ENCODE measurements at regions of chr13 and their contacts with region 1.

Region 1: GRCh38 chr13:94435604-94436226 is 43.8 kb downstream of the DCT start:
- DNase-seq: no peak
- H3K4me3 ChIP-seq: no peak overlapping the region
- H3K27ac ChIP-seq: no peak overlapping the region
- H3K4me1 ChIP-seq: no peaks in the 10 kb centered on the region
- H3K27me3 ChIP-seq: no peaks in the 10 kb centered on the region
- CTCF ChIP-seq: peak in 3 of 4 experiments; percentile 38 to 58 (median 57)
- POLR2A ChIP-seq: no peak

Region 2: DNA sequence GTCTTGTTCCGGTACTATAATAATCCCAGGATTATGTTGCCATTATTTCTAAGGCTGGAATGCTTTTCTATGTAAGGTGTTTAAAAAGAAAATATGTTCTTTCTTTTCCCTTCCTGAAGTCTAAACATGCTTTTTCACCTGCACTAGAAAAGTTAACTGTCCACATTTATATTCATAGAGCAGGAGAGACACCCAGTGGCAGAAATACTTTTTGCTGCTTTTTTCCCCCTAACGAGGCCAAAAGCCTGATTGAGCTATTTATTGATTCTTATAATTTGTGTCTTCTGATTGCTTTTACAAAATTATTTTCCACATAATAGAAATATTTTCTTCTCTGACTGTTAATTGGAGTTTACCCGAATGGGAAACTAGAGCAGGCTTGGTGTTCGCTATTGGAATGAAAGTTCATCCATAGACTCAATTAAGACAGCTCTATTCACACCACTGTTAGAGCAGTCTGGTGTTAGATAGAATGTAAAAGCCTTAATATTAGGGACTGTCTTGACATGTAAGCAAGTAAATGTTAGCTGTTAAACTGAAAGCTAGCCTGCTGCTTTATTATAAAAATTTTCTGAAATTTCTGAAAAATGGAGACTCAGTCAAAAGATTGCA is 181.8 kb after region 1 on chr13:
- intact Hi-C with region 1: loop called (anchors 2 kb)
- DNase-seq: no peak
- H3K4me3 ChIP-seq: no peak overlapping the region
- H3K27ac ChIP-seq: no peak overlapping the region
- H3K4me1 ChIP-seq: no peaks in the 10 kb centered on the region
- H3K27me3 ChIP-seq: no peaks in the 10 kb centered on the region
- CTCF ChIP-seq: peak in 3 of 4 experiments; percentile 51 to 66 (median 64)
- POLR2A ChIP-seq: no peak